Mammary epithelial cell (primary cell): ENCODE measurements at regions of chr13 and their contacts with region 1.

Region 1: GRCh38 chr13:20703780-20704445 is 414 bp downstream of the IL17D start:
- DNase-seq: peak; percentile 82
- H3K4me3 ChIP-seq: peak overlapping the region in 2 of 3 experiments; percentile 60 to 74
- H3K27ac ChIP-seq: no peak overlapping the region
- H3K4me1 ChIP-seq: peaks cover 6% of the 10 kb centered on the region
- H3K27me3 ChIP-seq: no peaks in the 10 kb centered on the region
- CTCF ChIP-seq: peak; percentile 36 to 44

Region 2: GRCh38 chr13:20035130-20035529 is 668.8 kb before region 1 on chr13:
- CTCF ChIA-PET with region 1: no interaction called
- dilution Hi-C with region 1: no loop called
- in situ Hi-C with region 1: no loop called
- intact Hi-C with region 1: no loop called
- DNase-seq: no peak
- H3K4me3 ChIP-seq: no peak overlapping the region
- H3K27ac ChIP-seq: no peak overlapping the region
- H3K4me1 ChIP-seq: no peaks in the 10 kb centered on the region
- H3K27me3 ChIP-seq: no peaks in the 10 kb centered on the region
- CTCF ChIP-seq: peak; percentile 15 to 30

Region 3: GRCh38 chr13:20495082-20496023 is 208.6 kb before region 1 on chr13:
- CTCF ChIA-PET with region 1: no interaction called
- dilution Hi-C with region 1: no loop called
- in situ Hi-C with region 1: no loop called
- intact Hi-C with region 1: loop called (anchors 1 kb)
- DNase-seq: peak; percentile 56
- H3K4me3 ChIP-seq: no peak overlapping the region
- H3K27ac ChIP-seq: no peak overlapping the region
- H3K4me1 ChIP-seq: peaks cover 10% of the 10 kb centered on the region
- H3K27me3 ChIP-seq: no peaks in the 10 kb centered on the region
- CTCF ChIP-seq: peak; percentile 91 to 98

Region 4: GRCh38 chr13:20525690-20526544 is 178.0 kb before region 1 on chr13 and contains the start of gene CRYL1:
- CTCF ChIA-PET with region 1: no interaction called
- dilution Hi-C with region 1: no loop called
- in situ Hi-C with region 1: no loop called
- intact Hi-C with region 1: loop called (anchors 10 kb)
- DNase-seq: peak; percentile 68
- H3K4me3 ChIP-seq: peak within 1 kb of the TSS; percentile 51 to 90 (median 69)
- H3K27ac ChIP-seq: peak within 1 kb of the TSS; percentile 21
- H3K4me1 ChIP-seq: peaks cover 13% of the 10 kb centered on the region
- H3K27me3 ChIP-seq: no peaks in the 10 kb centered on the region
- CTCF ChIP-seq: no peak
- total RNA-seq, gene CRYL1: 17.0 to 18.5 TPM

Region 5: GRCh38 chr13:20566898-20567874 is 136.7 kb before region 1 on chr13 and contains the start of gene IFT88:
- CTCF ChIA-PET with region 1: no interaction called
- dilution Hi-C with region 1: no loop called
- in situ Hi-C with region 1: no loop called
- intact Hi-C with region 1: loop called (anchors 2 kb)
- DNase-seq: peak; percentile 83
- H3K4me3 ChIP-seq: peak within 1 kb of the TSS; percentile 71 to 89 (median 89)
- H3K27ac ChIP-seq: peak within 1 kb of the TSS; percentile 89
- H3K4me1 ChIP-seq: peaks cover 8% of the 10 kb centered on the region
- H3K27me3 ChIP-seq: no peaks in the 10 kb centered on the region
- CTCF ChIP-seq: no peak
- total RNA-seq, gene IFT88: 10.3 to 11.2 TPM

Region 6: GRCh38 chr13:20911037-20911436 is 207.1 kb after region 1 on chr13:
- CTCF ChIA-PET with region 1: no interaction called
- dilution Hi-C with region 1: no loop called
- in situ Hi-C with region 1: no loop called
- intact Hi-C with region 1: no loop called
- DNase-seq: no peak
- H3K4me3 ChIP-seq: no peak overlapping the region
- H3K27ac ChIP-seq: no peak overlapping the region
- H3K4me1 ChIP-seq: no peaks in the 10 kb centered on the region
- H3K27me3 ChIP-seq: no peaks in the 10 kb centered on the region
- CTCF ChIP-seq: no peak